ENCODE measurements at regions of chr2 and their contacts with region 1.

Region 1: GRCh38 chr2:189661148-189661956 is at the start of gene ASNSD1:
- DNase-seq: peak; percentile 99
- H3K4me3 ChIP-seq: peak within 1 kb of the TSS; percentile 75 to 96 (median 85)
- H3K27ac ChIP-seq: peak within 1 kb of the TSS; percentile 87 to 90 (median 89)
- H3K4me1 ChIP-seq: peaks cover 22 to 37% (median 30%) of the 10 kb centered on the region in 4 donors
- H3K27me3 ChIP-seq: no peaks in the 10 kb centered on the region
- CTCF ChIP-seq: peak; percentile 95 to 100 (median 98)
- EP300 ChIP-seq: no peak
- POLR2A ChIP-seq: peak; percentile 23
- total RNA-seq, gene ASNSD1: 39.6 to 51.9 (median 47.2) TPM

Region 2: DNA sequence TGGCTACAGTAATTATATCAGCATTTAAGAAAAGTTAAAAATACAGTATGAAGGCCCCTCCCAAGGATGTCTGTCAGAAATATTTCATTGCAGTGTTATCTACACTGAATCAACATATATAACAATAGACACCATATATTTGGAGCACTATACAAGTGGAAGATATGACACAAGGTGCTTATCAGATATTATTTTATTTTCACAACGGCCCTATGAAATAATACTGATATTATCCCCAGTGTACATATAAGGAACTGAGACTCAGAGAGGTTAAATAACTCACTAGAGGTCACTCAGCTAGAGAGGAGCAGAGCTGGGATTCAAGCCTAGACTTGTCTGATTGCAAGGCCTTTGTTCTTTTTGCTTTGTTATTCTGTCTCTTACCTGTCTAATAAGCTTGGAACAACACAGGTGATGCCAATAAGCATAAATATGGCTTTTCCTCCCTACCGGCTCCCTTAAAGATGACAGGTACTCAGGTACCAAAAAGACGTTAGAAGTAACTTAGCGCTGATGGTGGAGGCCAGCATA is 76.1 kb before region 1 on chr2:
- intact Hi-C with region 1: no loop called
- DNase-seq: no peak
- H3K4me3 ChIP-seq: no peak overlapping the region
- H3K27ac ChIP-seq: no peak overlapping the region
- H3K4me1 ChIP-seq: peaks cover 7 to 11% (median 9%) of the 10 kb centered on the region in 4 donors
- H3K27me3 ChIP-seq: no peaks in the 10 kb centered on the region
- CTCF ChIP-seq: no peak
- EP300 ChIP-seq: no peak
- POLR2A ChIP-seq: no peak

Region 3: GRCh38 chr2:189696223-189696622 is 34.9 kb after region 1 on chr2:
- intact Hi-C with region 1: loop called (anchors 2 kb)
- DNase-seq: no peak
- H3K4me3 ChIP-seq: no peak overlapping the region
- H3K27ac ChIP-seq: no peak overlapping the region
- H3K4me1 ChIP-seq: peaks cover 0 to 10% (median 5%) of the 10 kb centered on the region in 4 donors
- H3K27me3 ChIP-seq: no peaks in the 10 kb centered on the region
- CTCF ChIP-seq: no peak
- EP300 ChIP-seq: no peak
- POLR2A ChIP-seq: no peak

Region 4: DNA sequence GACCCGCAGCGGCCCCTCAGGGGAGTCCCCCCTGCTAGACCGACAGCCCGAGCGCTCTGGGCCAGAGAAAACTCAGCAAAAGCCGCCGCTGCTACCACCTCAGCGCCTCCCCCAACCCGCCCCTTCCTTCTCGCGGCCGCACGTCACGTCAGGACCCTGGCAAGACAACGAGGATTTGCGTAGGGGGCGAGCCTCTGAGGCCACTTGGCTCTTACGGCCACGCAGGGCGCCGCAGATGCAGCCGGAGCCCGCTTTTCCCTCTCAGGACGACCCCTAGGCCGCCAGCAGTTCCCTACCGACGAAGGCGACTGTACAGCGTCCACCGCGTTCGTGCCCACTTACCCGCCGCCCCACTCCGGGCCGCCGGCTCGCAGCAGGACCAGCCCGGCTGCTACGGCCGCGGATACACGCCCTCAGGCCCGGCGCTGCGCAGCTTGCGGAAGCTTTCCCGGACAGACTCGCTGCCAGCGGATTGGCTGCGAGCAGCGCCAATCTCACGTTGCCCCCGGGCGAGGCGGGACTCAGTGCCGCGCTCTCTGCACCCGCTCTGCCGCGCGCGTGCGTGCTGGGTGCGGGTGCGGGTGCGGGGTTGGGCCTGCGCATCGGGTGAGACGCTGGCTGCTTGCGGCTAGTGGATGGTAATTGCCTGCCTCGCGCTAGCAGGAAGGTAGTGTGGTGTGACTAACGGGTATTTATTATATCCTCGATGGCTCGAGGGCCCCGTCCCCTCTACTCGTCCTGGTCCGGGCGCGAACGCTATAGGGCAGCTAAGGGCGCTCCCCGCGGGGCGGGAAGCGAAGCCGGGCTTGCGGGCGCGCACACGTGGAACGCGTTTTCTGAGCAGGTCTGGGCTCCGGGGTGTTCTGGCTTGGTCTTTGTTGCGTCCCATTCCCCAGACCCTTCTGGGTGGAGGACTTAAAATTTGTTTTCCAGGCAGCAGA is 122.8 kb after region 1 on chr2 and contains the starts of genes ORMDL1 and PMS1:
- intact Hi-C with region 1: loop called (anchors 5 kb)
- DNase-seq: peak; percentile 97
- H3K4me3 ChIP-seq: peak within 1 kb of the TSS; percentile 70 to 87 (median 76)
- H3K27ac ChIP-seq: peak within 1 kb of the TSS; percentile 92 to 98 (median 93)
- H3K4me1 ChIP-seq: peaks cover 23 to 55% (median 50%) of the 10 kb centered on the region in 4 donors
- H3K27me3 ChIP-seq: no peaks in the 10 kb centered on the region
- CTCF ChIP-seq: peak in 1 of 3 experiments; percentile 16
- EP300 ChIP-seq: no peak
- POLR2A ChIP-seq: peak; percentile 60
- total RNA-seq, gene ORMDL1: 25.4 to 60.2 (median 35.2) TPM
- total RNA-seq, gene PMS1: 12.0 to 15.0 (median 12.8) TPM

Region 5: DNA sequence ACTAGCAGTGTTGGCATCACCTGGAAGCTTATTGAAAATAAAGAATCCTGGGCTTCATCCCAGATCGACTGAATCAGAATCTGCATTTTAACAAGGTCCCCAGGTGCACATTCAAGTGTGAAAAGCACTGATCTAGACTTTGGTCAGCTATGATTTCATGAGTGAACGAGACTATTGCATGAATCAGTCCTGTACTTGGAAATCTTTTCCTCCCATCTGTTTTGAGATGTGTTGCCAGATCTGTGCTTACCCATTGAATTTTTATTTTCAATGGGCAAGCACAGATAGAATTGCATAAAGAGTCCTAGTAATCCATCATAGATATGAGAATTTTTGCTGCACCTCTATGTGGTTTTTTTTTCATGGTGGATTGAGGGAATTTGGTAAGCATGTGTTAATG is 186.9 kb after region 1 on chr2:
- intact Hi-C with region 1: no loop called
- DNase-seq: no peak
- H3K4me3 ChIP-seq: no peak overlapping the region
- H3K27ac ChIP-seq: no peak overlapping the region
- H3K4me1 ChIP-seq: no peaks in the 10 kb centered on the region
- H3K27me3 ChIP-seq: no peaks in the 10 kb centered on the region
- CTCF ChIP-seq: no peak
- EP300 ChIP-seq: no peak
- POLR2A ChIP-seq: no peak

Measured in esophagus muscularis mucosa (tissue), 4 donors.